ENCODE measurements at regions of chr14 and their contacts with region 1.

Region 1: DNA sequence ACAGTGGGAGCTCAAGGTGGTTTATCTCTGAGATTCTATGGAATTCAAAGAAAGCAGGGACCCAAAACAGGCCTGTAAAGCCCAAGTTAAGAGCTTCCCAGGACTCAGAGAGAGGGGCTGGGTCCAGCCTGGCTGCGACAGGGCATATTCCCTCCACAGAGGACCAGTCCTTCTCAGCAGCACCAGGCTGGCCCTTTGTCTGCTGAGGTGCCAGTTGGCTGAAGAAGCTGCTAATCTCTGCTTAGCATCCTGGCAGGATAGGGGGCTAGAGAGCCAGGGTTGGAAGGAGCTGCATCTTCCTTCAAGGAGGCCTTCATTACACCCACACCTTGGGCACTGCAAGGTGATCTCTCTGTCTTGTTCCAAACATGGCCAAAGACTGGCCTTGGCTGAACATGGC is 68.3 kb upstream of the TUNAR start:
- DNase-seq: no peak

Region 2: DNA sequence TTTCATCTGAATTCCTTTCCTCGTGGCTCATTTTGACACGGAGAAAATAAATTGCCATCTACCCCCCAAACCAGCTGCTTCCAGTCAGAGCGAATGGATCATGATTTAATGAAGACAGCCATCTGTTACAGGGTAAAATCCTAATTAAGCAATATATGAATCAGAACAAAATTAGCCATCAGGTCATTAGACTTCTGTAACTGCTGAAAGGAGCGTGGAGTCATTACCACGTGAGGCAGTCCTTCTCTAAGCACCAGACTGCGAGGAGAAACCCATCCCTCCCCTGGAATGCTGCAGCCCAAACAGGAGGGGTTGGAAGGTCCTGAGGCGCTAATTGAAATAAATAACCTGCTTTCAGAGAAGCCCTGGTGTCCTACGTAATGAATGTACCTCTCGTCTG is 43.3 kb before region 1 on chr14:
- in situ Hi-C with region 1: loop called (anchors 5 kb)
- DNase-seq: no peak

Region 3: GRCh38 chr14:95928751-95929150 is 120.4 kb after region 1 on chr14:
- in situ Hi-C with region 1: no loop called
- DNase-seq: no peak

Region 4: GRCh38 chr14:95952945-95953724 is 144.8 kb after region 1 on chr14:
- in situ Hi-C with region 1: no loop called
- DNase-seq: no peak

Measured in SK-MEL-5 (cell line).